ENCODE measurements at regions of chr18 and their contacts with region 1.

Region 1: GRCh38 chr18:62714671-62715435 is 488 bp upstream of the PHLPP1 start:
- DNase-seq: peak; percentile 85
- H3K4me3 Mint-ChIP-seq: peak overlapping the region; percentile 87
- H3K27ac Mint-ChIP-seq: peak overlapping the region; percentile 85
- H3K4me1 Mint-ChIP-seq: peaks cover 35% of the 10 kb centered on the region
- H3K27me3 Mint-ChIP-seq: peaks cover 21% of the 10 kb centered on the region

Region 2: DNA sequence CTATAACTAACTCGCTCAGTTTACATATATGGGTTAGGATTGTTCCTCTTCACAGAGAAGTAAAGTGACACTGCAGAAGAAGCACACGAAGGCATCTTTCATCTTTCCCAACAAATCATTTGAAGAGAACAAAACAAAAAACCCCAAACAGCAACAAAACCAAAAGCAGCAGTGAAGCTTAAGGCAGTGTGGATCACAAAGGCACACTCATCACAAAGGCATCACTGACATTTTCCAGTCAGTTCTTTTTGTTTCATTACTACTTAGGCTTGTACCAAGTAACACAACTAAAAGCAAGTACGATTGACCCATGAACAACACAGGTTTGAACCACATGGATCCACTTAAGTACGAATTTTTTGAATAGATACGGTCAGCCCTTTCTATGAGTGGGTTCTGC is 897.8 kb before region 1 on chr18:
- intact Hi-C with region 1: no loop called
- DNase-seq: no peak
- H3K4me3 Mint-ChIP-seq: no peak overlapping the region
- H3K27ac Mint-ChIP-seq: no peak overlapping the region
- H3K4me1 Mint-ChIP-seq: no peaks in the 10 kb centered on the region
- H3K27me3 Mint-ChIP-seq: no peaks in the 10 kb centered on the region

Region 3: GRCh38 chr18:62324917-62325805 is 389.7 kb before region 1 on chr18 and contains the start of gene TNFRSF11A:
- intact Hi-C with region 1: loop called (anchors 5 kb)
- DNase-seq: peak; percentile 62
- H3K4me3 Mint-ChIP-seq: peak within 1 kb of the TSS; percentile 97
- H3K27ac Mint-ChIP-seq: peak within 1 kb of the TSS; percentile 87
- H3K4me1 Mint-ChIP-seq: peaks cover 62% of the 10 kb centered on the region
- H3K27me3 Mint-ChIP-seq: peaks cover 34% of the 10 kb centered on the region
- total RNA-seq, gene TNFRSF11A: 22.9 and 27.1 TPM in 2 replicates

Region 4: DNA sequence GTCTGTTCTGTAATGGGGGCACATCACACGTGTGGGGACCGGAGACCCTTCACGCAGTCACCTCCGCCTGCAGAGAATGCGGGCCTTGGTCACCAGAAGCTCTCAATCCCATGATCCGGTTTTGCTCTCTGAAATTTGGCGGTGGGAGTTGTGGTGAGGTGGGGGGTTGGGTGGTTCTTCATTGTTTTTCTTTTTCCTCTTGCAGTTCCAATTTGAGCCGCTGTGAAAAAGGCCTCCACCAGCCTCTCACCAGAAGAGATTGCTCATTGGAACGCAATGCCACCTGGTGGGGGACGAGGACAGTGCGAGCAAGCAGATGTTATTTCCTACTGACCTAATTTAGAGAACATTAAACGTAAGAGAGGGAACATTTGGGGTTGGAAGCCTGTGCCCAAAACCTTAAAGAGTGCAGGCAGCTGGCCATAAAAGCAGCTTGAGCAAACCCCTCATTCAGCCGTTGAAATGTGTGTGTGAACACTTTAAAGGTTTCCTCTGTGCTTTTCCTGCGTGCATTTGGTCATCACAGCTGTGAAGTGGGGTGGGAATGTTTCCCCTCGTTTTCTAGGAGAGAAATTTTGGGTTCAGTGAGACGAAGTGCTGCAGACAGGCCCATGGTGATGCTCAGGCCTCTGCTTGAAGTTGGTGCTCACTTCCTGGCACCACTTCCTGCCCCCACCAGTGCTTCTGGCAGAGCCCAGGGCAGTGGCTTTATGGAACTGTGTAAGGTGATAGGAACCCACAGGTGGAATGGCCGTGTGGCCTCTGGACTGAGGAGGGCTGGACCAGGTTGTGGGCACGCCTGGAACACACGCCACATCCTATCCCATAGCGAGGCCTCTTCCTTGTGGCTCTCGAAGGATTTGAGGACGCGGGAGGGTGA is 130.4 kb before region 1 on chr18:
- intact Hi-C with region 1: loop called (anchors 1 kb)
- DNase-seq: peak; percentile 75
- H3K4me3 Mint-ChIP-seq: peak overlapping the region; percentile 0
- H3K27ac Mint-ChIP-seq: peak overlapping the region; percentile 61
- H3K4me1 Mint-ChIP-seq: peaks cover 44% of the 10 kb centered on the region
- H3K27me3 Mint-ChIP-seq: no peaks in the 10 kb centered on the region

Region 5: GRCh38 chr18:62802523-62802922 is 87.7 kb after region 1 on chr18:
- intact Hi-C with region 1: loop called (anchors 1 kb)
- DNase-seq: no peak
- H3K4me3 Mint-ChIP-seq: no peak overlapping the region
- H3K27ac Mint-ChIP-seq: no peak overlapping the region
- H3K4me1 Mint-ChIP-seq: no peaks in the 10 kb centered on the region
- H3K27me3 Mint-ChIP-seq: no peaks in the 10 kb centered on the region

Region 6: GRCh38 chr18:62982600-62983251 is 267.9 kb after region 1 on chr18:
- intact Hi-C with region 1: loop called (anchors 1 kb)
- DNase-seq: peak; percentile 28
- H3K4me3 Mint-ChIP-seq: no peak overlapping the region
- H3K27ac Mint-ChIP-seq: no peak overlapping the region
- H3K4me1 Mint-ChIP-seq: no peaks in the 10 kb centered on the region
- H3K27me3 Mint-ChIP-seq: no peaks in the 10 kb centered on the region

Region 7: GRCh38 chr18:63367053-63367953 is 652.5 kb after region 1 on chr18 and contains the start of gene KDSR:
- intact Hi-C with region 1: loop called (anchors 2 kb)
- DNase-seq: peak; percentile 82
- H3K4me3 Mint-ChIP-seq: peak within 1 kb of the TSS; percentile 93
- H3K27ac Mint-ChIP-seq: peak within 1 kb of the TSS; percentile 83
- H3K4me1 Mint-ChIP-seq: peaks cover 44% of the 10 kb centered on the region
- H3K27me3 Mint-ChIP-seq: no peaks in the 10 kb centered on the region
- total RNA-seq, gene KDSR: 72.2 and 83.5 TPM in 2 replicates

Region 8: DNA sequence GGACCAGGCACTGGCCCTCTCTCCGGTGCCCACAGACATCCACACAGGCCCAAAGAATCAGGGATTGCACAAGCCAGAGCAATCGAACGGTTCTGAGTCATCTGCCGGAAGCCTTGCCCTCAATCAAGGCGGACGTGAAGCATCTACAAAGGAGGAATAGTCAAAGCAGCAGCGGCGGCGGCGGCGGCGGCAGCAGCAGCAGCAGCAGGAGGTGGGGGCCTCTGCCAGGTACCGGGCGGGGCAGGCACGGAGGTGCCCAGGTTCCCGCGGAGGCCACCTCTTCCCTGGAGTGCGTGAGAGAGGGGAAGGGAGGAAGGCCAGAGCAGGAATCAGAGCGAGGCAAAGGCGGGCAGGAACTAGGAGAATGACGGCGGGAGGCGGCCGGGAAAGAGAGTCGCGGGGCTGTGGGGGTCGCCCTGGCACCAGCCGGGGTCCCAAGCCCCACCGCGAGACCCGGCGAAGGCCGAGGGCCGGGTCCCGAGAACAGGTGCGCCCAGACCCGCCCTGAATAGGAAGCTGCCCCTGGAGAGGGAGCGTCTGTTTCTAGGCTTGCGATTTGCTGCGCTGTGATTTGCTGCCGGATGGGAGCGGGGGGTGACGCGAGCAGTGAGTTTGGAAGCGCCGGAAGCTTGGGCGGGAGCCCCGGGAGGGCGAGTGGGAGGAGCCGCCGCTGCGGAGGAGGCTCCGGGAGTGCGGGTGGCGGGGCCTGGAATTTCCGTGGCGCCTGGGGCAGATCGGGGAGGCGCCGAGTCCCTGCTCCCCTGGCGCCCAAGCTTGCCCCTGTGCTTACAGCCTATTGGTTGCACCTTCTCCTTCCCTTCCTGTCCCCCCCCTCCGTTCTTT is 1255.3 kb after region 1 on chr18 and contains the start of gene SERPINB8:
- intact Hi-C with region 1: loop called (anchors 1 kb)
- DNase-seq: peak; percentile 74
- H3K4me3 Mint-ChIP-seq: peak within 1 kb of the TSS; percentile 97
- H3K27ac Mint-ChIP-seq: peak within 1 kb of the TSS; percentile 98
- H3K4me1 Mint-ChIP-seq: peaks cover 54% of the 10 kb centered on the region
- H3K27me3 Mint-ChIP-seq: no peaks in the 10 kb centered on the region
- total RNA-seq, gene SERPINB8: 22.8 and 25.7 TPM in 2 replicates

Measured in activated T-helper 1 cell treated with anti-CD3 and anti-CD28 coated beads, Interleukin-12 subunit alpha, Interleukin-12 subunit beta, Interleukin-2, Interleukin-4 antibody, amounts not matched to agents 30 ng/mL and 10 ng/mL and 1 ng/mL, durations not matched to agents 14 hours and 24 hours and 36 hours (primary cell).